H1 (cell line): ENCODE measurements at regions of chr15 and their contacts with region 1.

Region 1: GRCh38 chr15:70722266-70723121 is 40.9 kb downstream of the UACA start:
- DNase-seq: no peak
- H3K4me3 ChIP-seq: no peak overlapping the region
- H3K27ac ChIP-seq: no peak overlapping the region
- H3K4me1 ChIP-seq: no peaks in the 10 kb centered on the region
- H3K27me3 ChIP-seq: no peaks in the 10 kb centered on the region
- CTCF ChIP-seq: peak in 2 of 3 experiments; percentile 33 to 45; a peak in 2 of 4 replicates
- EP300 ChIP-seq: no peak
- POLR2A ChIP-seq: no peak
- RAD21 ChIP-seq: peak; percentile 38 to 44

Region 2: DNA sequence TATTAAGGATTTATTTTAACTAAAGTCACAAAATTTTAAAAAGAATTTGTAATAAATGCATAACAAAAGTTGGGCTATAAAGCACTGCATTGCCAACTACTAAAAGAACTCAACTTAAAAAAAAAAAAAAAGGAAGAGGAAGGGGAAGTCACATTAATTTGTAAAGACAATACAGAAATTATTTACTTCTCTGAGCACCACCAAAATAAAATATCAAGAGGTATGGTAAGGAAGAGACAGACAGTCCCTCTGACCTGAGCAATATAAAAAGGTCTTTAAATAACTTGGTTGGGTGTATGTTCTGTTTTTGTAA is 42.6 kb before region 1 on chr15:
- CTCF ChIA-PET with region 1: interaction called, 40 read pairs
- POLR2A ChIA-PET with region 1: no interaction called
- DNase-seq: no peak
- H3K4me3 ChIP-seq: no peak overlapping the region
- H3K27ac ChIP-seq: no peak overlapping the region
- H3K4me1 ChIP-seq: no peaks in the 10 kb centered on the region
- H3K27me3 ChIP-seq: no peaks in the 10 kb centered on the region
- CTCF ChIP-seq: no peak
- EP300 ChIP-seq: no peak
- POLR2A ChIP-seq: no peak
- RAD21 ChIP-seq: no peak

Region 3: DNA sequence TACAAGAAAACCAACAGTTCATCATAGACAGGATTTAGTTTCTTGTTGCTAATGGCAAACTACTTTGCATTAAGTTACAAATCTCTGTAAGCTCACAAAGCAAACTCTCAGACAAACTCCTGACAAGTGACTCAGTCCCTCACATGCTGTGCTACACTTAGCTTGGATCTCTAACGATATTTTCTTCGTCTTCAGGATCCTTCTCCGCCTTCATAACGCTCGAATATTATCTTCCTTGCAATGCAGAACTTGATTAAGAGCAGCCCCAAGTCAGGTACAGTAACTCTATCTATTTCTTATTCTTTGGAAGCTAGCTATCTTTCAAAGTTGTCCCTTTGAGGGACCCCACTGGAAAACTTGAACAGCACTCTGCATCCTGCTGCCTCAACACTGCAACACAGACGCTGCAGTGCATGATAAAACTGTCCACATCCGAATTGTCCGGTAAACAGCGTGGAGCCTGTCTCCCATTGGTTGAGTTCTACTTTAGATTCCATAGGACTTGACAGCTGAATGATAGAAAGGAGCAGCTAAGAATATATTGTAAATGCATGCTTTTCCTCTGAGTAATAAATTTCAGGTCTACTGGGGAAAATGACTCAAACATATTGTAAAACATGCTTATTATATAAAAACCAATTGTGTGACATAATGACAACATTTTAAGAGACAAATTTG is 20.5 kb before region 1 on chr15:
- CTCF ChIA-PET with region 1: interaction called, 21 read pairs
- POLR2A ChIA-PET with region 1: interaction called, 3 read pairs
- DNase-seq: no peak
- H3K4me3 ChIP-seq: no peak overlapping the region
- H3K27ac ChIP-seq: no peak overlapping the region
- H3K4me1 ChIP-seq: peaks cover 3 to 11% (median 7%) of the 10 kb centered on the region in 4 experiments
- H3K27me3 ChIP-seq: peaks cover 0 to 1% (median 0%) of the 10 kb centered on the region in 4 experiments; a peak in 1 of 7 replicates
- CTCF ChIP-seq: no peak
- EP300 ChIP-seq: no peak
- POLR2A ChIP-seq: no peak
- RAD21 ChIP-seq: no peak

Region 4: DNA sequence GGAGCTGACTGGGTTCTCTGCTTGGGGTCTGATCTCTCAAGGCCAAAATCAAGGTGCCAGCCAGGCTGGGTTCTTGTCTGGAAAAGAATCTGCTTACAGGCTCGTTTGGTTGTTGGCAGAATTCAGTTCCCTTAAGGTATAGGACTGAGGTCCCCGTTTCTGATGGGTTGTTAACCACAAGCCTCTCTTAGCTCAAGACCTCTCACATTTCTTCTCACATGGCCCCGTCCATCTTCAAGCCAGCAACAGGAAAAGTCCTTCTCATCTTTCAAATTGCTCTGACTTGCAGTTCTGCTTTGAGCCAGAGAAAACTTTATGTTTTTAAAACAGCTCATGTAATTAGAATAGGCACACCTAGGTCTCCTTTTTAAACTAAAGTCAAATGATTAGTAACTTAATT is 20.4 kb after region 1 on chr15:
- CTCF ChIA-PET with region 1: interaction called, 15 read pairs
- POLR2A ChIA-PET with region 1: no interaction called
- DNase-seq: no peak
- H3K4me3 ChIP-seq: no peak overlapping the region
- H3K27ac ChIP-seq: no peak overlapping the region
- H3K4me1 ChIP-seq: peaks cover 0 to 2% (median 0%) of the 10 kb centered on the region in 4 experiments; a peak in 1 of 7 replicates
- H3K27me3 ChIP-seq: no peaks in the 10 kb centered on the region
- CTCF ChIP-seq: no peak
- EP300 ChIP-seq: no peak
- POLR2A ChIP-seq: no peak
- RAD21 ChIP-seq: no peak

Region 5: DNA sequence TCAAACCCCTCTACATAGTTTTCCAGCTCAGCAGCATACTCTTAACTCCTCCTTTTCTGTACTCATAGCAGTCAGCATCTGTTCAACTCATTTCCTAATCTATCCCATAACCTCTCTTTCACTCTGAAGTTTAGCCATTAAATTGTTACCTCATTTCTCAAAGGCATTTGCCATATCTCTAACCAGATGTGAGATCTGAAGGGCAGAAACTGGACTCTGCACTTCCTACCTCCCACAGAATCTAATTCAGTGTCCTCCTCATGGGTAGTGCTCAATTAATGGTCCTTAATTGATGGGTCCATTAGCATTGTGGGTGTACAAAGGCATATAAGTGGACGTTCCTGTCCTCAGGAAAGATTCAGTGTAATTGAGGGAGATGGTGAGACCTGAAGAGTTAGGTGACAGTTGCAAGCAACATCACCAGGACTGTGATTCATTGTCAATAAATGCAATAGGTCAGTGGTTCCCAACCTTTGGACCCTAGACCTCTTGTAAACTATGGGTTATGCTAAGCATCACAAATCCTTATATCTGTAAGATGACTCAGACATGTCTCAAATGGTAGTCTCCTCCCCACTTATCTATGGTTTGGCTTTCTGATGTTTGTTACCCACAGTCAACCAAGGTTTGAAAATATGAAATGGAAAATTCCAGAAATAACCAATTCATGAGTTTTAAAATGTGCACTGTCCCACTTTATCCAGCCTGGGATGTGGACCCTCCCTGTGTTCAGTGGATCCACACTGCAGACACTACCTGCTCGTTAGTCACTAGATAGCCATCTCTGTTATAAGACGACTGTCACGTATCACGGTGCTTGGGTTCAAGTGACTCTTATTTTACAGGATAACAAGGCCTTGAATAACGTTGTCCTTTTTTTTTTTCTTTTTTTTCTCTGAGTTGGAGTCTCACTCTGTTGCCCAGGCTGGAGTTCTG is 65.9 kb after region 1 on chr15:
- CTCF ChIA-PET with region 1: no interaction called
- POLR2A ChIA-PET with region 1: no interaction called
- DNase-seq: no peak
- H3K4me3 ChIP-seq: no peak overlapping the region
- H3K27ac ChIP-seq: no peak overlapping the region
- H3K4me1 ChIP-seq: no peaks in the 10 kb centered on the region; a peak in 1 of 7 replicates
- H3K27me3 ChIP-seq: no peaks in the 10 kb centered on the region
- CTCF ChIP-seq: no peak
- EP300 ChIP-seq: no peak
- POLR2A ChIP-seq: no peak
- RAD21 ChIP-seq: no peak

Region 6: GRCh38 chr15:70810916-70811578 is 88.6 kb after region 1 on chr15:
- CTCF ChIA-PET with region 1: interaction called, 12 read pairs
- POLR2A ChIA-PET with region 1: no interaction called
- DNase-seq: no peak
- H3K4me3 ChIP-seq: no peak overlapping the region
- H3K27ac ChIP-seq: no peak overlapping the region
- H3K4me1 ChIP-seq: no peaks in the 10 kb centered on the region
- H3K27me3 ChIP-seq: no peaks in the 10 kb centered on the region
- CTCF ChIP-seq: peak in 2 of 3 experiments; percentile 12 to 23; a peak in 2 of 4 replicates
- EP300 ChIP-seq: no peak
- POLR2A ChIP-seq: no peak
- RAD21 ChIP-seq: 0 out of 4 replicates have a peak, but pooled peaks of 1 of the 2 experiments have one; percentile 10

Region 7: DNA sequence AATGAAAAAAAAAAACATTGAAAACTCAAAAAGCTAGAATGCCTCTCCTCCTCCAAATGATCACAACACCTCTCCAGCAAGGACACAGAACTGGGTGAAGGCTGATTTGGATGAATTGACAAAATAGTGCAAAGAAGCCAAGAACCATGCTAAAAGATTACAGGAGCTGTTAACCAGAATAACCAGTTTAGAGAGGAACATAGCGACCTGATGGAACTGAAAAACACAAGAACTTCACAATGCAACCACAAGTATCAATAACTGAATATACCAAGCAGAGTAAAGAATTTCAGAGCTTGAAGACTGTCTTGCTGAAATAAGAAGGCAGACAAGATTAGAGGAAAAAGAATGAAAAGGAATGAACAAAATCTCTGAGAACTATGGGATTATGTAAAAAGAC is 302.2 kb after region 1 on chr15:
- CTCF ChIA-PET with region 1: no interaction called
- POLR2A ChIA-PET with region 1: no interaction called
- DNase-seq: no peak
- H3K4me3 ChIP-seq: no peak overlapping the region
- H3K27ac ChIP-seq: no peak overlapping the region
- H3K4me1 ChIP-seq: no peaks in the 10 kb centered on the region
- H3K27me3 ChIP-seq: no peaks in the 10 kb centered on the region
- CTCF ChIP-seq: no peak
- EP300 ChIP-seq: no peak
- POLR2A ChIP-seq: no peak
- RAD21 ChIP-seq: no peak

Region 8: GRCh38 chr15:71304681-71305080 is 582.2 kb after region 1 on chr15:
- CTCF ChIA-PET with region 1: no interaction called
- POLR2A ChIA-PET with region 1: no interaction called
- DNase-seq: no peak
- H3K4me3 ChIP-seq: no peak overlapping the region
- H3K27ac ChIP-seq: no peak overlapping the region
- H3K4me1 ChIP-seq: no peaks in the 10 kb centered on the region
- H3K27me3 ChIP-seq: no peaks in the 10 kb centered on the region
- CTCF ChIP-seq: no peak
- EP300 ChIP-seq: no peak
- POLR2A ChIP-seq: no peak
- RAD21 ChIP-seq: no peak